CD8-positive, alpha-beta memory T cell (primary cell): ENCODE measurements at regions of chr1 and their contacts with region 1.

Region 1: DNA sequence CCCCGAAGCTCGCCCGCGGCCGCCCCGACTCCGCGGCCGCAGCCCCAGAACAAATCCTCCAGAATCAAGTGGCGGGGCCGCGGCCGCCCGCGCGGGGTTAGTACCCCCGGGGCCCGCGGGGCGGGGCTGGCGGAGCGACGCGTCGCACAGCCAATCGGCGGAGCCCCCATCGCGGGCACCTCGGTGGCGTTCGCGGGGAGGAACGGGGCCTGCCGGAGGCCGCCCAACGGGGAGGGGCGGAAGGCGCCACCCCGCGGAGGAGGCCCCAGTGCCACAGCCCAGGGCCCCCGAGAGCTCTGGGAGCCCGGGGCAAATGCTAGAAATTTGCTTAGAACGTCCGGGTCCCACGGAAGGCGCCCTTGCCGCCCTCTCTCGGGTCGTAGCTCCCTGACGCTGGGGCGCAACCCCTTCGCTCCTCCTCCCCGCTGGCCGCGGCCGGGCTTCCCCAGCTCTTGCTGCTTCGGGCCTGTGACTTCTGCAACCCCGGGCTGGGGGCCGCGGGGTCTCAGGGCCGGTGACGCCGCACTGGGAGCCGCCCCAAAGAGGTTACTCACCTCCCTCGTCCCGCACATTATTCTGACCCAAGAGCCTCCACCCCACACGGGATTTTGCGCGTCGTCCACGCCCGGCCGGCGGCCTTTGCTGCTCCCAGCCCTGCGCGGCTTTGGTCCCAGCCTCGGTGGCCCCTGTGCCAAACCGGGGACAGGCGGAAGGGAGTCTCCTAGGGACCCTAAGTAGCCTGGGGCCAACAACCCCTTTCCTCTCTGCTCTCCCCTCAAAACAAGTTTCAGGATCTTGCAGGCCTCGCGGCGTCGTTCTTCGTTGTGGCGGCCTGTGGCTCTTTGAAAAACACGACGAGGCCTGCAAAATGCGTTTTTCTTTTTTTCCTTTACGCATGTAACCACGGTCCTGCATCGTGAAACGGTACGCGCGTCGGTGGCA is at the start of gene RUNX3:
- DNase-seq: peak; percentile 91 to 96 (median 95)
- H3K4me3 ChIP-seq: peak within 1 kb of the TSS; percentile 77
- H3K4me3 Mint-ChIP-seq: peak within 1 kb of the TSS; percentile 87 to 99 (median 97)
- H3K27ac ChIP-seq: peak within 1 kb of the TSS; percentile 89
- H3K27ac Mint-ChIP-seq: peak within 1 kb of the TSS; percentile 85 to 100 (median 100)
- H3K4me1 ChIP-seq: peaks cover 51% of the 10 kb centered on the region
- H3K4me1 Mint-ChIP-seq: peaks cover 34 to 69% (median 54%) of the 10 kb centered on the region in 3 donors
- H3K27me3 ChIP-seq: no peaks in the 10 kb centered on the region
- H3K27me3 Mint-ChIP-seq: peaks cover 0 to 10% of the 10 kb centered on the region in 2 donors
- total RNA-seq, gene RUNX3: 218 to 241 TPM

Region 2: DNA sequence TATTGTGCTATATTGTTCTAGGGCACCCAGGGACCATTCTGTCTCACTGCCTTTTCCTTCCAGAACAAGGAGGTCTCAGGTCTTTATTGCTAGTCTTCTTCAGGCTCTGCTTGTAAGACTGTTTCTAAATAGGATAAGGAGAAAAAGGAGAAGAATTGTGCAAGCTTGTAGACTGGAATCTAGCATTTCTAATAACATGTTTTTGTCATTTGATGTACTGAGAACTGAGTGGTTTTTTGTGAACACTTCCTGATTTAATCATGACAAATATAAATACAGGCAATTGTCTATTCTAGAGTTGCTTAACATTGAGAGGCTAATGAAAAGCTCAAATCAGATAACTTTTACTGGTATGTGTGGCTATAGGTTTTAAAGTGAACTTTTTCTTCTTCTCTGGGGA is 107.6 kb before region 1 on chr1:
- CTCF ChIA-PET with region 1: no interaction called
- POLR2A ChIA-PET with region 1: no interaction called
- DNase-seq: no peak
- H3K4me3 ChIP-seq: no peak overlapping the region
- H3K4me3 Mint-ChIP-seq: no peak overlapping the region
- H3K27ac ChIP-seq: no peak overlapping the region
- H3K27ac Mint-ChIP-seq: no peak overlapping the region
- H3K4me1 ChIP-seq: no peaks in the 10 kb centered on the region
- H3K4me1 Mint-ChIP-seq: no peaks in the 10 kb centered on the region
- H3K27me3 ChIP-seq: no peaks in the 10 kb centered on the region
- H3K27me3 Mint-ChIP-seq: peaks cover 2 to 36% of the 10 kb centered on the region in 2 donors

Region 3: GRCh38 chr1:24897767-24898483 is 32.5 kb before region 1 on chr1:
- CTCF ChIA-PET with region 1: interaction called, 6 read pairs
- POLR2A ChIA-PET with region 1: interaction called, 17 read pairs
- DNase-seq: peak in 3 of 5 donors; percentile 36 to 60 (median 43)
- H3K4me3 ChIP-seq: no peak overlapping the region
- H3K4me3 Mint-ChIP-seq: peak overlapping the region in 4 of 7 donors; percentile 28 to 68 (median 56)
- H3K27ac ChIP-seq: no peak overlapping the region
- H3K27ac Mint-ChIP-seq: peak overlapping the region; percentile 53 to 94 (median 87)
- H3K4me1 ChIP-seq: peaks cover 30% of the 10 kb centered on the region
- H3K4me1 Mint-ChIP-seq: peaks cover 44 to 60% (median 47%) of the 10 kb centered on the region in 3 donors
- H3K27me3 ChIP-seq: no peaks in the 10 kb centered on the region
- H3K27me3 Mint-ChIP-seq: peaks cover 0 to 4% of the 10 kb centered on the region in 2 donors

Region 4: DNA sequence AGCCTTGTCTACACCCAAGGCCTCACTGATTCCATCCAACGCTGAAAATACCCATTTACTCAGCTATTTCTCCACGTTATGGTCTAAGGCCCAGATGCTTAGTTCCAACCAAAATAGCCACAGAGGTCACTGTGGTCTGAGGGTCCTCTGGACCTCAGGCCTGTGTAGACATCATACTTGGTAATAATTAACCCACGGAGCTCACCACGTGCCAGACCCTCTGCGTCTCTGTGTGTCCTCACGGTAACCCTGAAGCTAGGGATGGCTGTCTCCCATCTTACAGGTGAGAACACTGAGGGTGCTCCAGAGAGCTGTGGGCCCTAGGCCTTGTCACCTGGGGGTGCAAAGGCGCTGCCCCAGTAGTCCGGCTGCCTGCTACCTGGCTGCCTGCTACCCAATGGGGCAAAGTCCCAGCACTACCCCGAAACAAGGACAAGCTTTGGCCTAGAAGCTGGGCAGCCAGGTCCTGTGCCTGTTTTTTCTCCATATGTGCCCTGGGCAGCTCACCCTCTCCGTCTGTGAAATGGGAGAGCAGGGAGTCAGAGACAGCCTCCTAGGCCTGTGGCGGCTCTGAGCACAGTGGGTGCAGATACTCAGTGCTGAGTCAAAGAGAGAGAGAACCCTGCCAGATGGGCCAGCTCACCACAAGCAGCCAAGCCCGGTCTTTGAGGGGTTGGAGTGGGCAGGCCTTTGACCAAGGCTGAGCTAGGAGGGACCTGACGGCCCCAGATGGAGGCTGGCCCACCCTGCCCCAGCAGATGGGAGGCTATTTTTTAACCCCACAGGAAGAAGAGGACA is 16.6 kb after region 1 on chr1:
- CTCF ChIA-PET with region 1: interaction called, 23 read pairs
- POLR2A ChIA-PET with region 1: interaction called, 11 read pairs
- DNase-seq: no peak
- H3K4me3 ChIP-seq: no peak overlapping the region
- H3K4me3 Mint-ChIP-seq: peak overlapping the region in 1 of 7 donors; percentile 31
- H3K27ac ChIP-seq: no peak overlapping the region
- H3K27ac Mint-ChIP-seq: peak overlapping the region in 6 of 8 donors; percentile 23 to 78 (median 68)
- H3K4me1 ChIP-seq: peaks cover 9% of the 10 kb centered on the region
- H3K4me1 Mint-ChIP-seq: peaks cover 34 to 81% (median 48%) of the 10 kb centered on the region in 3 donors
- H3K27me3 ChIP-seq: no peaks in the 10 kb centered on the region
- H3K27me3 Mint-ChIP-seq: peaks cover 0 to under 1% of the 10 kb centered on the region in 2 donors

Region 5: GRCh38 chr1:25022361-25023189 is 92.1 kb after region 1 on chr1:
- CTCF ChIA-PET with region 1: interaction called, 8 read pairs
- POLR2A ChIA-PET with region 1: interaction called, 20 read pairs
- DNase-seq: peak; percentile 93 to 99 (median 96)
- H3K4me3 ChIP-seq: peak overlapping the region; percentile 58
- H3K4me3 Mint-ChIP-seq: peak overlapping the region; percentile 48 to 84 (median 75)
- H3K27ac ChIP-seq: peak overlapping the region; percentile 97
- H3K27ac Mint-ChIP-seq: peak overlapping the region; percentile 89 to 100 (median 98)
- H3K4me1 ChIP-seq: peaks cover 79% of the 10 kb centered on the region
- H3K4me1 Mint-ChIP-seq: peaks cover 66 to 81% (median 75%) of the 10 kb centered on the region in 3 donors
- H3K27me3 ChIP-seq: no peaks in the 10 kb centered on the region
- H3K27me3 Mint-ChIP-seq: no peaks in the 10 kb centered on the region

Region 6: GRCh38 chr1:25099343-25099951 is 169.0 kb after region 1 on chr1:
- CTCF ChIA-PET with region 1: interaction called, 74 read pairs
- POLR2A ChIA-PET with region 1: interaction called, 5 read pairs
- DNase-seq: peak; percentile 22 to 78 (median 44)
- H3K4me3 ChIP-seq: peak overlapping the region; percentile 30
- H3K4me3 Mint-ChIP-seq: peak overlapping the region; percentile 34 to 89 (median 76)
- H3K27ac ChIP-seq: peak overlapping the region; percentile 0
- H3K27ac Mint-ChIP-seq: peak overlapping the region; percentile 25 to 95 (median 90)
- H3K4me1 ChIP-seq: peaks cover 71% of the 10 kb centered on the region
- H3K4me1 Mint-ChIP-seq: peaks cover 71 to 78% (median 75%) of the 10 kb centered on the region in 3 donors
- H3K27me3 ChIP-seq: no peaks in the 10 kb centered on the region
- H3K27me3 Mint-ChIP-seq: no peaks in the 10 kb centered on the region